IMR-90 (cell line): ENCODE measurements at regions of chr4 and their contacts with region 1.

Region 1: DNA sequence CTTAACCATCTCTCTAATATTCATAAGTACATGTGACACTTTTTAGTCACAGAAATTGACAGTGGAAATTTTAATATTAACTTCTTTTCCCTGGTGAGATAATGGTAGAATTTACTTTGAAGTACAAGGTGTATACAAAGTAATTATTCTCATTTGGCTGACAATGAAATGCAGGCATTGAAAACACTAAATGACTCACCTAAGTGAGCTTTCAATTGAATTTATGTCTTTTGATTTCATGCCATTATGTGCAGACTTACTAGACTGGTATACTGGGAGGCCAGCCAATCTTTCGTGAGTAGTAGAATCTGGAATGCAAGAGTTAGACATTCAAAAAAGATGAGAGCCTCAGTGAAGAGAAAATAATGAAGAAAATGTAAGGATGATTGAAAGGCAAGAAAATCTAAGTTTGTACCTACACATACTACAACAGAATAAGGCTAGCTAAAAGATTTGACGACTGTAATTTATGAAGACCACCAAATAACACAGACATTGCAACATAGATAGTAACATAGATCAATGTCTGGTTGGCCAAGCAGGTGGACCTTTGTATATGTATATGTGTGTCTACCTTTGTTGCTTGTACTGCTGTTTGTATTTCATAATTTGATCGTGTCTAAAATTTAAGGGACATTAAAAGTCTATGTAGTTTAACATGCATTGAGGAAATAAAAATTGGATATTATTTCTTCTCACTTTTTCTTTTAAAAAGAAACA is 459.7 kb downstream of the IL15 start:
- DNase-seq: peak; percentile 96
- ATAC-seq: peak; percentile 53
- H3K4me3 ChIP-seq: no peak overlapping the region
- H3K27ac ChIP-seq: no peak overlapping the region
- H3K4me1 ChIP-seq: peaks cover 9% of the 10 kb centered on the region
- H3K27me3 ChIP-seq: no peaks in the 10 kb centered on the region
- CTCF ChIP-seq: no peak
- POLR2A ChIP-seq: no peak
- RAD21 ChIP-seq: no peak

Region 2: DNA sequence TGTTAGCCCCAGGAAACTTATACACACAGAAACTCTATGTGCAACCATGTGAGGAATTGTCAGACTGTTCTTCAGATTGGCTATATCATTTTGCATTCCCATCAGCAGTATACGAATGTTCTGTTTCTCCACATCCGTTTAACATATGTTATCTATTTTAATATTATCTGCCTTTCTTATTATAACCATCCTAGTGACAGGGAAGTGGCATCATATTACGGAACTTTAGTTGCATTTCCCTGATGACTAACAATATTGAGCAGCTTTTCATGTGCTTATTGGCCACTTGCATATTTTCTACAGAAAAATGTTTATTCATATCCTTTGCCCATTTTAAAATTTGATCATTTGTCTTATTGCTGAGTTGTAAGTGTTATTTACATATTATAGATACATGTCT is 496.2 kb before region 1 on chr4:
- CTCF ChIA-PET with region 1: no interaction called
- POLR2A ChIA-PET with region 1: interaction called, 20 read pairs
- dilution Hi-C with region 1: no loop called
- in situ Hi-C with region 1: no loop called
- intact Hi-C with region 1: no loop called
- DNase-seq: peak; percentile 51
- ATAC-seq: no peak
- H3K4me3 ChIP-seq: no peak overlapping the region
- H3K27ac ChIP-seq: no peak overlapping the region
- H3K4me1 ChIP-seq: no peaks in the 10 kb centered on the region
- H3K27me3 ChIP-seq: no peaks in the 10 kb centered on the region
- CTCF ChIP-seq: no peak
- POLR2A ChIP-seq: no peak
- RAD21 ChIP-seq: no peak

Region 3: GRCh38 chr4:141643557-141643956 is 452.5 kb before region 1 on chr4:
- CTCF ChIA-PET with region 1: no interaction called
- POLR2A ChIA-PET with region 1: no interaction called
- dilution Hi-C with region 1: no loop called
- in situ Hi-C with region 1: no loop called
- intact Hi-C with region 1: loop called (anchors 5 kb)
- DNase-seq: peak; percentile 92
- ATAC-seq: peak; percentile 85
- H3K4me3 ChIP-seq: no peak overlapping the region
- H3K27ac ChIP-seq: no peak overlapping the region
- H3K4me1 ChIP-seq: peaks cover 11% of the 10 kb centered on the region; the same call in 1 of the 2 replicates
- H3K27me3 ChIP-seq: no peaks in the 10 kb centered on the region
- CTCF ChIP-seq: no peak
- POLR2A ChIP-seq: no peak
- RAD21 ChIP-seq: no peak

Region 4: GRCh38 chr4:141826260-141826659 is 269.8 kb before region 1 on chr4:
- CTCF ChIA-PET with region 1: no interaction called
- POLR2A ChIA-PET with region 1: no interaction called
- dilution Hi-C with region 1: no loop called
- in situ Hi-C with region 1: no loop called
- intact Hi-C with region 1: loop called (anchors 10 kb)
- DNase-seq: peak; percentile 81
- ATAC-seq: peak; percentile 71
- H3K4me3 ChIP-seq: no peak overlapping the region
- H3K27ac ChIP-seq: no peak overlapping the region
- H3K4me1 ChIP-seq: no peaks in the 10 kb centered on the region; the same call in 1 of the 2 replicates
- H3K27me3 ChIP-seq: no peaks in the 10 kb centered on the region
- CTCF ChIP-seq: no peak
- POLR2A ChIP-seq: no peak
- RAD21 ChIP-seq: no peak